ENCODE measurements at regions of chr14 and their contacts with region 1.

Region 1: DNA sequence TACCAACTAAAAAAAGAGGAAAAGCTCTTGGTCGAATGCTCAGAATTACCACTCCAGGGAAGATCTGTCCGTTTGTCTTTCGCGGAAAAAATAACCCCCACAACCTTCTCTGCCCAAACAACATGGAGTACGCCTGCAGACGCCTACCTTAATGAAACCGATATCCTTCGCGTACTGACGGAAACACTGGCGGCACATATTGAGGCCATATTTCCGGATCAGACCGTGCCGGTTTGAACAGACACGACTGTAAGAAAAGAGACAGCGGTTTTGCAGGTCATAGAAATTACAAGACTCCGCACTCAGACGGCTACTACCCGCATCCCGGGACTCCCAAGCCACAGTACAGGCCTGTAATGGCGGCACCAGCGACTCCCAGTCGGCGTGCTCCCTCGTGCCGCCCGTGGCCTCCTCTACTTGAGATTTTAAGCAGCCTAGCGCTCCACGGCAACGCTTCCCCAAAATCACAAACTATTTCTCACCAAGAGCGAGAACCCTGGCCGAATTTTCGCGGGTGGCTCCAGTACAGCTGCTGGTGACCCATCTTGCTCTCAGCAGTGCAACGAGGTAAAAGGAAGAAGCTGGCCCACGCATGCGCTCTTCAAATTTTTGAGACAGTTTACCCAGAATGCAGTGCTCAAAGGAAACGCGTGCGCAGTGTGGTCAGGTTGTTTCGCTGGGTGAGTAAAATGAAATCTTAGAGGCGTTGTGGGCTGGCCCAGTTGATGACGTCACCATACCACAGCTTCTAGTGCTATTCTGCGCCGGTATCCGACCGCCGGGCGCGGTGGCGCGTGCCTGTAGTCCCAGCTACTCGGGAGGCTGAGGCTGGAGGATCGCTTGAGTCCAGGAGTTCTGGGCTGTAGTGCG is at the start of gene RPS29:
- DNase-seq: peak; percentile 94 to 100 (median 97)
- ATAC-seq: peak; percentile 85 to 89 (median 88)
- H3K4me3 ChIP-seq: peak within 1 kb of the TSS; percentile 77 to 99
- H3K4me3 Mint-ChIP-seq: peak within 1 kb of the TSS; percentile 89 to 98 (median 98)
- H3K27ac ChIP-seq: peak within 1 kb of the TSS; percentile 93
- H3K27ac Mint-ChIP-seq: peak within 1 kb of the TSS; percentile 97 to 99
- H3K4me1 ChIP-seq: peaks cover 6 to 31% of the 10 kb centered on the region in 2 experiments
- H3K4me1 Mint-ChIP-seq: peaks cover 50 to 54% (median 52%) of the 10 kb centered on the region in 3 donors
- H3K27me3 ChIP-seq: no peaks in the 10 kb centered on the region
- H3K27me3 Mint-ChIP-seq: peaks cover 2 to 3% of the 10 kb centered on the region in 2 donors
- total RNA-seq, gene RPS29: 3,720 to 4,554 (median 3,981) TPM

Region 2: GRCh38 chr14:49396801-49397200 is 189.2 kb before region 1 on chr14:
- CTCF ChIA-PET with region 1: no interaction called
- POLR2A ChIA-PET with region 1: no interaction called
- DNase-seq: no peak
- ATAC-seq: no peak
- H3K4me3 ChIP-seq: no peak overlapping the region
- H3K4me3 Mint-ChIP-seq: no peak overlapping the region
- H3K27ac ChIP-seq: no peak overlapping the region
- H3K27ac Mint-ChIP-seq: no peak overlapping the region
- H3K4me1 ChIP-seq: no peaks in the 10 kb centered on the region
- H3K4me1 Mint-ChIP-seq: no peaks in the 10 kb centered on the region
- H3K27me3 ChIP-seq: no peaks in the 10 kb centered on the region
- H3K27me3 Mint-ChIP-seq: peaks cover 6 to 20% of the 10 kb centered on the region in 2 donors

Region 3: GRCh38 chr14:49461529-49462401 is 124.3 kb before region 1 on chr14:
- CTCF ChIA-PET with region 1: interaction called in 1 of 2 experiments, 18 read pairs
- POLR2A ChIA-PET with region 1: no interaction called
- DNase-seq: peak in 31 of 35 experiments; percentile 9 to 87 (median 43)
- ATAC-seq: peak; percentile 74 to 87 (median 82)
- H3K4me3 ChIP-seq: no peak overlapping the region
- H3K4me3 Mint-ChIP-seq: no peak overlapping the region
- H3K27ac ChIP-seq: no peak overlapping the region
- H3K27ac Mint-ChIP-seq: no peak overlapping the region
- H3K4me1 ChIP-seq: no peaks in the 10 kb centered on the region
- H3K4me1 Mint-ChIP-seq: no peaks in the 10 kb centered on the region
- H3K27me3 ChIP-seq: no peaks in the 10 kb centered on the region
- H3K27me3 Mint-ChIP-seq: peaks cover 0 to 4% of the 10 kb centered on the region in 2 donors

Region 4: DNA sequence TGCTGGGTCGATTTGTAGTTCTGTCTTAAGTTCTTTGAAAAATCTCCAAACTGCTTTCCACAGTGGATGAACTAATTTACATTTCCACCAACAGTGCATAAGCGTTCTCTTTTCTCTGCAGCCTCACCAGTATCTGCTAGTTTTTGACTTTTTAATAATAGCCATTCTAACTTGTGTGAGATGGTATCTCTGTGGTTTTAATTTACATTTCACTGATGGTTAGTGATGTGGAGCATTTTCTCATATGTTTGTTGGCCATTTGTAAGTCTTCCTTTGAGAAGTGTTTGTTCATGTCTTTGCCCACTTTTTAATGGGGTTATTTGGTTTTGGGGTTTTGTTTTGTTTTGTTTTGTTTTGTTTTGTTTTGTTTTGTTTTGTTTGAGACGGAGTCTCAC is 25.7 kb before region 1 on chr14:
- CTCF ChIA-PET with region 1: interaction called in 1 of 2 experiments, 10 read pairs
- POLR2A ChIA-PET with region 1: no interaction called
- DNase-seq: no peak
- ATAC-seq: no peak
- H3K4me3 ChIP-seq: no peak overlapping the region
- H3K4me3 Mint-ChIP-seq: no peak overlapping the region
- H3K27ac ChIP-seq: no peak overlapping the region
- H3K27ac Mint-ChIP-seq: no peak overlapping the region
- H3K4me1 ChIP-seq: no peaks in the 10 kb centered on the region
- H3K4me1 Mint-ChIP-seq: no peaks in the 10 kb centered on the region
- H3K27me3 ChIP-seq: peaks cover 0 to 2% of the 10 kb centered on the region in 2 experiments
- H3K27me3 Mint-ChIP-seq: peaks cover 3 to 4% of the 10 kb centered on the region in 2 donors

Region 5: DNA sequence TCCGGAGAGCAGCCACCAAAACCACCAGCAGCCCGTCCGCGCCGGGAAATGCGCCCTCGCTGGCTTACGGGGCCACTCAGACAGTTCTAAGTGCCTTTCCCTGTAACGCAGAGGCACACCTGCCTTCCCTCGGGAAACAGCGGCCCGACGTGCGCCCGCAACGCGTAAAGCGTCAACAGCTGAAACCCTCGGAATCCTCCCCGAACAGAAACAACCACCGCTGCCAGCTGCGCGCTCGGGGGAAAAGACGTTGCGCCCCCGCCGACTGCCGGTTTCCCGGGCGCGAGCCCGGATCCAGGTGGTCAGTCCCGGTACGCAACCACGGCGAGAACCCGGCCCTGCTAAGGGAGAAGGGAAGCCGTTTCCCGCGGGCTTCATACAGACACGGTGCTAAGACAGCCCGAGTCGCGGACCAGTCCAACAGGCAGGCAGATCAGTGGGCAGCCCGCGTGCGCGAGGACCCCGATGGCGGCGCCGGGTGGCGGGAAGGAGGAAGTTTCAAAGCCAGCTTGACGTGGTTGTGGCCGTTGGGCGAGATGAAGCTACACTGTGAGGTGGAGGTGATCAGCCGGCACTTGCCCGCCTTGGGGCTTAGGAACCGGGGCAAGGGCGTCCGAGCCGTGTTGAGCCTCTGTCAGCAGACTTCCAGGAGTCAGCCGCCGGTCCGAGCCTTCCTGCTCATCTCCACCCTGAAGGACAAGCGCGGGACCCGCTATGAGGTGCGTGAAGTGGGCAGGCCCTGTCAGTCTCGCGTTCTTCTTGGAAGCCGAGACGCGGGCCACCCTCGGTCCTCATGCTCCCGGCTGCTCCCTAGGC is 12.7 kb after region 1 on chr14 and contains the start of gene LRR1:
- CTCF ChIA-PET with region 1: interaction called, 6 to 17 read pairs
- POLR2A ChIA-PET with region 1: interaction called, 5 to 27 read pairs
- DNase-seq: peak; percentile 59 to 91 (median 80)
- ATAC-seq: peak; percentile 81 to 88 (median 85)
- H3K4me3 ChIP-seq: peak within 1 kb of the TSS; percentile 80
- H3K4me3 Mint-ChIP-seq: peak within 1 kb of the TSS; percentile 93 to 98 (median 96)
- H3K27ac ChIP-seq: peak within 1 kb of the TSS; percentile 85
- H3K27ac Mint-ChIP-seq: peak within 1 kb of the TSS; percentile 95 to 98
- H3K4me1 ChIP-seq: peaks cover 6 to 13% of the 10 kb centered on the region in 2 experiments
- H3K4me1 Mint-ChIP-seq: peaks cover 27 to 52% (median 34%) of the 10 kb centered on the region in 3 donors
- H3K27me3 ChIP-seq: no peaks in the 10 kb centered on the region
- H3K27me3 Mint-ChIP-seq: no peaks in the 10 kb centered on the region
- total RNA-seq, gene LRR1: 7.6 to 15.7 (median 11.4) TPM

Region 6: GRCh38 chr14:49620182-49621113 is 34.4 kb after region 1 on chr14 and contains the starts of genes MGAT2 and RPL36AL:
- CTCF ChIA-PET with region 1: interaction called, 3 to 54 read pairs
- POLR2A ChIA-PET with region 1: interaction called, 23 to 42 read pairs
- DNase-seq: peak; percentile 84 to 96 (median 91)
- ATAC-seq: peak; percentile 88 to 91 (median 90)
- H3K4me3 ChIP-seq: peak within 1 kb of the TSS; percentile 74 to 78
- H3K4me3 Mint-ChIP-seq: peak within 1 kb of the TSS; percentile 97 to 99 (median 97)
- H3K27ac ChIP-seq: peak within 1 kb of the TSS; percentile 95
- H3K27ac Mint-ChIP-seq: peak within 1 kb of the TSS; percentile 98 to 99
- H3K4me1 ChIP-seq: peaks cover 20 to 34% of the 10 kb centered on the region in 2 experiments
- H3K4me1 Mint-ChIP-seq: peaks cover 51 to 58% (median 58%) of the 10 kb centered on the region in 3 donors
- H3K27me3 ChIP-seq: no peaks in the 10 kb centered on the region
- H3K27me3 Mint-ChIP-seq: no peaks in the 10 kb centered on the region
- total RNA-seq, gene MGAT2: 21.7 to 54.1 (median 41.6) TPM
- total RNA-seq, gene RPL36AL: 211 to 322 (median 291) TPM

Region 7: GRCh38 chr14:49633640-49634546 is 47.9 kb after region 1 on chr14:
- CTCF ChIA-PET with region 1: interaction called in 1 of 2 experiments, 15 read pairs
- POLR2A ChIA-PET with region 1: interaction called, 4 to 7 read pairs
- DNase-seq: peak; percentile 83 to 96 (median 91)
- ATAC-seq: peak; percentile 84 to 88 (median 85)
- H3K4me3 ChIP-seq: peak overlapping the region; percentile 92 to 96
- H3K4me3 Mint-ChIP-seq: peak overlapping the region; percentile 95 to 99 (median 97)
- H3K27ac ChIP-seq: peak overlapping the region; percentile 98
- H3K27ac Mint-ChIP-seq: peak overlapping the region; percentile 92 to 94
- H3K4me1 ChIP-seq: peaks cover 4 to 41% of the 10 kb centered on the region in 2 experiments
- H3K4me1 Mint-ChIP-seq: peaks cover 48 to 68% (median 63%) of the 10 kb centered on the region in 3 donors
- H3K27me3 ChIP-seq: no peaks in the 10 kb centered on the region
- H3K27me3 Mint-ChIP-seq: no peaks in the 10 kb centered on the region

Region 8: GRCh38 chr14:49659526-49660455 is 73.8 kb after region 1 on chr14:
- CTCF ChIA-PET with region 1: no interaction called
- POLR2A ChIA-PET with region 1: no interaction called
- DNase-seq: no peak
- ATAC-seq: no peak
- H3K4me3 ChIP-seq: no peak overlapping the region
- H3K4me3 Mint-ChIP-seq: no peak overlapping the region
- H3K27ac ChIP-seq: no peak overlapping the region
- H3K27ac Mint-ChIP-seq: no peak overlapping the region
- H3K4me1 ChIP-seq: no peaks in the 10 kb centered on the region
- H3K4me1 Mint-ChIP-seq: peaks cover 0 to 2% (median 0%) of the 10 kb centered on the region in 3 donors
- H3K27me3 ChIP-seq: no peaks in the 10 kb centered on the region
- H3K27me3 Mint-ChIP-seq: no peaks in the 10 kb centered on the region

Region 9: DNA sequence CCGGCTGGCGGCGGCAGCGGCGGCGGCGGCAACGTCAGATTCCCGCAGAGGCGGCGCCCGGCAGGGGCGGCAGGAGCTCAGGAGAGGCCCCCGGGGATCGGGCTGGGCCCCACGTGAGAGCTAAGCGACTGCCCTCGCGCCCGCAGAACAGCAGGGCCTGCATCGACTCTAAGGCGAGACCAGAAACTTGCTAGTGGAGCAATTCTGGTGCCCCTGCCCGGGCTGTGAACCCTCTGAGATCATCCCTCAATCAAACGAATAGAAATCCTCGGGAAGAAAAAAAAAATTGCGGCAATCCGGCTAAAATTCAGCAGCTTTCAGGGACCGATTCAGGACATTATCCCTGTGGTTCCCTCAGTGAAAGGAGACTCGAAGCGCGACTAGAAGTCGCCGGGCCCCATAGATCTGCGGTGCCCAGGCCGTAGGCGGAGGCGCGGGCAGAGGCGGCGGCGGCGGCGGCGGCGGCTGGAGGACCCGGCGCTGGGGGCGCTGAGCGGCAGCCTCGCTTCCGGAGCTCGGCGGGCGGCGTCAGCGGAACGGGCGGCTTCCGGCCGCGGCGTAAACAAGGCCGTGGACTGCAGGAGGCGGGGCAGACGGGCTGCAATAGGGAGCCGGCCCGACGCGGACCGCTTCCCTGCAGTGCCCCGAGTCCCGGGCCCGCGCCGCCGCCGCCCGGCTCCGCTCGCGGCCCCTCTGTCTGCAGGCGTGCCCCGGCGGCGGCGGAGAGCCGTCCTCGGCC is 181.7 kb after region 1 on chr14 and contains the start of gene KLHDC2:
- CTCF ChIA-PET with region 1: interaction called in 1 of 2 experiments, 16 read pairs
- POLR2A ChIA-PET with region 1: interaction called, 5 read pairs
- DNase-seq: peak; percentile 78 to 93 (median 86)
- ATAC-seq: peak; percentile 81 to 91 (median 88)
- H3K4me3 ChIP-seq: peak within 1 kb of the TSS; percentile 98 to 99
- H3K4me3 Mint-ChIP-seq: peak within 1 kb of the TSS; percentile 92 to 98 (median 95)
- H3K27ac ChIP-seq: peak within 1 kb of the TSS; percentile 98
- H3K27ac Mint-ChIP-seq: peak within 1 kb of the TSS; percentile 98 to 99
- H3K4me1 ChIP-seq: peaks cover 10 to 32% of the 10 kb centered on the region in 2 experiments
- H3K4me1 Mint-ChIP-seq: peaks cover 33 to 40% (median 38%) of the 10 kb centered on the region in 3 donors
- H3K27me3 ChIP-seq: no peaks in the 10 kb centered on the region
- H3K27me3 Mint-ChIP-seq: no peaks in the 10 kb centered on the region
- total RNA-seq, gene KLHDC2: 69.0 to 115 (median 69.2) TPM